ENCODE measurements at regions of chr10 and their contacts with region 1.

Region 1: DNA sequence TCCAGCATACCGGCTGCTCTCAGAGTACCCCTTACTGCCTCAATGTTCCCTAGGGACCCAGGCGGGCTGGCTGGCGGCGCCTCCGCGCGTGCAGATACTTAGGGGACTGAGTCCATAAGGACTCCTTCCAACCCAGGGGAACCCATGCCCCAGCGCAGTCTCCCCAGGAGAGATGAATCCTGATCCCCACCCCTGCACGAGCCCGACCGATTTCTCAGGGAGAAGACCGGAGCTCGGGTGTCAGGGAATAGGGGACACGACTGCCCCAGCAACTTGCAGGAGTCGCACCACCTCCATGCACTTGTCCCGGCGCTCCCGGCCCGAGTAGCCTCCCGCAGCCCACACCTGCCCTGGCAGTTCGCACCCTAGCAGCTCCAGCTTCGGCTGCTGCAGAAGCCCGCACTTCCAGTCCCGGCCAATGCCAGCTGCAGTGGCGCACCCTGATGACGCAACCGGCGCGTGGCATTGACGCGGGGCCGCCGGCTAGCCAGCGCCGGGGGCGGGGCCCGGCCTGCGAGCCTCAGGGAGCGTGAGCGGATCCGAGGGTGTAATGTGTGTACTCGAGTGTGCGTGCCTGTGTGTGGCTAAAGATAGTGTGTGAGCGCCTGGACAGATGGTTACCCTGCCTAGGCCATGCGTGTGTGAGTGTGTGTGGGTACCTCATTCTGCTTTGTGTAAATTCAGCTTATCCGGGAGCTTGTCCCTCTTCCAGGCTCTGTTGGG is at the start of gene GPAM:
- DNase-seq: peak; percentile 93 to 100 (median 98)
- ATAC-seq: peak; percentile 96
- H3K4me3 ChIP-seq: peak within 1 kb of the TSS; percentile 70
- H3K4me3 Mint-ChIP-seq: peak within 1 kb of the TSS; percentile 95
- H3K27ac ChIP-seq: peak within 1 kb of the TSS; percentile 30 to 65
- H3K27ac Mint-ChIP-seq: peak within 1 kb of the TSS; percentile 95
- H3K4me1 ChIP-seq: peaks cover 12% of the 10 kb centered on the region
- H3K4me1 Mint-ChIP-seq: peaks cover 38% of the 10 kb centered on the region
- H3K27me3 ChIP-seq: no peaks in the 10 kb centered on the region
- H3K27me3 Mint-ChIP-seq: peaks cover 9% of the 10 kb centered on the region
- CTCF ChIP-seq: no peak
- total RNA-seq, gene GPAM: 4.8 to 6.7 TPM

Region 2: DNA sequence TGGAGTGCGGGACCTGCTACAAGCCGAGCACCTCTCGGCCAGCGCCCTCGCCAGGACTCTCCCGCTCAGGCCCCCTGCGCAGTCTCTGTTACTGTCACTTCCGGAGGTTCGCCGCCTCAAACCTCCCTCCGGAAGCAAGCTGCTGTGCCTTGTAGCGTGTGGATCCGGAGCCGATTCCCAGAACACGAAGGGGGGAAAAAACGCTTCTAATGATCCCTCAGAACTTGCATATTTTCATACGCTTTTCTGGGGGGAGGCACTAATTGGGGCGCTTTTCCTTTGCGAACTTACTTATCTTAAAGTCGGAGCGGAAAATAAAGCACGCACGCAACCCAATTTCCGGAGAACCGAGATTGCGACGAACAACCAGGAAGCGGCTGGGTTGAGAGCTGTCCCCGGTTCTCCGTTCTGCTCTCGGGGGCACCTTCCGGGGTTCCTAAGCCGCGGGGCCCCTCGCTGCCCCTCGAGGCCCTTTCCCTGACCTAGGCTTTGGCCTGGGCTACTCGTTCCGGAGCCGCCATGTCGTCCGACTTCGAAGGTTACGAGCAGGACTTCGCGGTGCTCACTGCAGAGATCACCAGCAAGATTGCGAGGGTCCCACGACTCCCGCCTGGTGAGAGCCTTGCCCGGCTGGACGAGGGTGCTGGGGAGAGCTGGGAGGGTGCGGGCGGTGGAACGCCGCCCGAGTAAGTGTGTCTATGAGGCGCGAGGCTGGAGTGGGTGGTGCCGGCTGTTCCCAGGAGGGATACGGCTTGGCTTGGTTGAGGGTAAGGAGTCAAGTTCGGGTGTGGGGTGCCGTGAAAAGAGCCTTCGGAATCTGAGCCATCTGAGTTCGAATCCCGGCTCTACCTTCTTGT is 263.6 kb after region 1 on chr10 and contains the starts of genes VTI1A and ZDHHC6:
- CTCF ChIA-PET with region 1: no interaction called
- POLR2A ChIA-PET with region 1: interaction called, 8 read pairs
- intact Hi-C with region 1: loop called (anchors 2 to 5 kb)
- DNase-seq: peak; percentile 74 to 92 (median 79)
- ATAC-seq: peak; percentile 85
- H3K4me3 ChIP-seq: peak within 1 kb of the TSS; percentile 87
- H3K4me3 Mint-ChIP-seq: peak within 1 kb of the TSS; percentile 91
- H3K27ac ChIP-seq: peak within 1 kb of the TSS; percentile 79 to 84
- H3K27ac Mint-ChIP-seq: peak within 1 kb of the TSS; percentile 89
- H3K4me1 ChIP-seq: peaks cover 16% of the 10 kb centered on the region
- H3K4me1 Mint-ChIP-seq: peaks cover 73% of the 10 kb centered on the region
- H3K27me3 ChIP-seq: no peaks in the 10 kb centered on the region
- H3K27me3 Mint-ChIP-seq: no peaks in the 10 kb centered on the region
- CTCF ChIP-seq: no peak
- total RNA-seq, gene VTI1A: 54.5 to 56.5 TPM
- total RNA-seq, gene ZDHHC6: 34.3 to 39.9 TPM